Lower leg skin (tissue), 4 donors: ENCODE measurements at regions of chr12 and their contacts with region 1.

Region 1: DNA sequence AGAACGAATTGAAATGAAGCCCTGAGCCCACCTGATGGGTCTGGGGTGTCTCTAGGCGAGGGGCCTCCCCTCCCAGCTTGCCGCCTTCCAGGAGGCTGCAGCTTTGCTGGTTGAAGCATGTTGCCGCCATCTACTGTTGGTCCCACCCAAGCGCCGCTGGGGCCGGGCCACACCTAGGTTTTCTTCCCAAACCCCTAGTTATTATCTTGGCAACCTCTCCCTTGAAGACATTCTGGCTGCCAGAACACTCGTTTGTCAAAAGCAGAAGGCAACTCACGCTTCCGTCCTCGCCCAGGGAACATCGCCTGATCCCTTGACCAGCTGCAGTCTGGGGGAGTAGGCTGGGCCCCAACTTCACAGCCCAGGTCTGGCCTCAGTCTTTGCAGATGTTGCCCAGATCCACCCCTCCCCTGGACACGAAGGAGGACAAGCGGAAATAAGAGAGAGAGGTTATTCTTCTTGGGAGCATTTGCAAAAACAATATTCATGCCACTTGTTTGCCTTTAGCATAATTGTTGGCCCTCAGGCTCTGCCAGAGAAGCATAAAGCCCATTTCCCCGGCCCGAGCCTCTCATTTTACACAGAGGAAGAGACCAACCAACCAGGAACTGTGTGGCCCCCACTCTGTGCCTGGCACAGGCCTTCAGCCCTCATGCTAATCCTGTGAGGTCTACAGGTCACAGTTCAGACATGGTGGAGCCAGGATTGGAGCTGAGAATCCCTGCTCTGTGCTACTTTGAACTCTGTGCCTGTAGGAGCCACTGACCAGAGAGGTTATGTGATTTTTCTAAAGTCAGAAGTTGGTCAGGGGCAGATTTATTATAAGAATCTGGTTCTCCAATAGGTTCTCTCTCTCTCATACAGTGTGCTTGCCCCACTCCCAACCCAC is 6.8 kb downstream of the EMP1 start:
- DNase-seq: peak; percentile 80 to 95
- H3K4me3 ChIP-seq: no peak overlapping the region
- CTCF ChIP-seq: no peak
- POLR2A ChIP-seq: no peak

Region 2: DNA sequence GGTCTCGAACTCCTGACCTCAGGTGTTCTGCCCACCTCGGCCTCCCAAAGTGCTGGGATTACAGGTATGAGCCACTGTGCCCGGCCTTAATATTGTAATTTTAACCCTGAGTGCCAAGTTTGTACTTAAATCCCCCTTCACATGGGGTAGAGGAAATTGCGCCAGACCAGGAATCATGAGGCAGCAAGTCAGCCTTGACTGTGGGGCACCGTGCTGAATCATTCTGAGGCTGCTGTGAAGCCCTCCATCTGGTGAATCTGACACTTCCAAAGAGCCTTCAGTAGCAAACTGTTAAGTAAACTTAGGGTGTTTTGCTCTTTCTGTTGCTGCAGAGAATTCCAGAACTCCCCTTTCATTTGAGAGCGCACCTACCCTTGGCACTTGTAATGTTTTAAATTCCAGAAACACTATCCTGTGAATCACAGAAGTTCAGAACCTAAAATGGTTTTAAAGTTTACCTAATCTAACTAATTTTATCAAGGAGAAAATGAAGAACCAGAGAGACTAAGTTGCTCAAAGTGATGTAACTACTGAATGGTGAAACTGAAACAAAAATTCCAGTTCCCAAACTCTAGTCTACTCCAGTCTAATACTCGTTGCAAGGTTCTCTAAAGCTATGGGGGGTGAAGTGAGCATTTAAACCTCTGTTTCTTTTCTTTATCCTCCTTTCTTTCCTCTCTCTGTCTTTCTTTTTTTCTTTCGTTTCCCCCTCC is 210.7 kb before region 1 on chr12:
- intact Hi-C with region 1: no loop called
- DNase-seq: no peak
- H3K4me3 ChIP-seq: no peak overlapping the region
- CTCF ChIP-seq: no peak
- POLR2A ChIP-seq: no peak

Region 3: DNA sequence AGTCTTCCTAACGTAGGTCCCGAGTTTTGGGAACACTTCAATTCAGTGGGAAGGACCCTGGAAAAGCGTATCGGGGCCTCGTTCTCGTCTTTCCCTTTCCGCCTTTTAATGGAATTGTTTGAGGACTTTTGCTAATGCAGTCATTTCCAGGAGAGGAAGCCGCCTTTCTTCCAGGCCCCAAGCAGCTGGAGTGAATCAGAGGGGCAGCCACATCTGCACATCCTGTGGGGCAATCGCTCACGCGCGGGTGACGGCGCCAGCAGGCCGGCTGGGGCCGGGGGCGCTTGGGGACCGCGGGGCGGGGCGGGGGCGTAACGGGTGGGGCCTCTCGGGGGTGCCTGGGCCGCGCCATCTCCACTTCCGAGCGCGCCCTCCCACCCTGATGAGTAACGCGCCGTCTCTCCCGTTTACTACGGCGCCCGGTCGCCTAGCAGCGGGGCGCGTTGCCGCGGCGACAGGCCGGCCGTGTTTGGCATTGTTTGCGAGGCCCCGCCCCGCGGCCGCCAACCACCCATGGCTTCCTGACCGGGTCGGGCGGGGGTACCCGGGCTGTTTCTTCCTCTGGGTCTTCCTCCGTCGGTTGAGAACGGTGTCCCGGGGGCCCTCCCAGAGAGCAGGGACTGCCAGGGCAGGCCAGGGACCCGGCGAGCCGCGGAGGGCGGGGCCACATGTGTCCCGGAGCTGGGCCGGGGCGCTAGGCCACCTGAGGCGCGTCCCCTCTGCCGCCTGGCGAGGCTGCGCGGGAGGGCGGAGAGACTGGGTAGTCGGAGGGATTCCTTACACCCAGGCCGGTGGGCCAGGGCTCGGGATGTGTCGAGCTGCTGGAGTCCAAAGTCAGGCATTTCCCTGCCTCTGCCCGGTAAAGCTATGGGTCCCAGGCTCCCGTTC is 102.2 kb before region 1 on chr12:
- intact Hi-C with region 1: loop called (anchors 5 kb)
- DNase-seq: peak; percentile 93 to 99
- H3K4me3 ChIP-seq: peak overlapping the region; percentile 18
- CTCF ChIP-seq: no peak
- POLR2A ChIP-seq: no peak

Region 4: GRCh38 chr12:13223179-13223859 is 20.0 kb after region 1 on chr12:
- intact Hi-C with region 1: no loop called
- DNase-seq: peak in 1 of 2 donors; percentile 7
- H3K4me3 ChIP-seq: no peak overlapping the region
- CTCF ChIP-seq: no peak
- POLR2A ChIP-seq: no peak